Cardiac septum (tissue), 1 donor: ENCODE measurements at regions of chr15 and their contacts with region 1.

Region 1: DNA sequence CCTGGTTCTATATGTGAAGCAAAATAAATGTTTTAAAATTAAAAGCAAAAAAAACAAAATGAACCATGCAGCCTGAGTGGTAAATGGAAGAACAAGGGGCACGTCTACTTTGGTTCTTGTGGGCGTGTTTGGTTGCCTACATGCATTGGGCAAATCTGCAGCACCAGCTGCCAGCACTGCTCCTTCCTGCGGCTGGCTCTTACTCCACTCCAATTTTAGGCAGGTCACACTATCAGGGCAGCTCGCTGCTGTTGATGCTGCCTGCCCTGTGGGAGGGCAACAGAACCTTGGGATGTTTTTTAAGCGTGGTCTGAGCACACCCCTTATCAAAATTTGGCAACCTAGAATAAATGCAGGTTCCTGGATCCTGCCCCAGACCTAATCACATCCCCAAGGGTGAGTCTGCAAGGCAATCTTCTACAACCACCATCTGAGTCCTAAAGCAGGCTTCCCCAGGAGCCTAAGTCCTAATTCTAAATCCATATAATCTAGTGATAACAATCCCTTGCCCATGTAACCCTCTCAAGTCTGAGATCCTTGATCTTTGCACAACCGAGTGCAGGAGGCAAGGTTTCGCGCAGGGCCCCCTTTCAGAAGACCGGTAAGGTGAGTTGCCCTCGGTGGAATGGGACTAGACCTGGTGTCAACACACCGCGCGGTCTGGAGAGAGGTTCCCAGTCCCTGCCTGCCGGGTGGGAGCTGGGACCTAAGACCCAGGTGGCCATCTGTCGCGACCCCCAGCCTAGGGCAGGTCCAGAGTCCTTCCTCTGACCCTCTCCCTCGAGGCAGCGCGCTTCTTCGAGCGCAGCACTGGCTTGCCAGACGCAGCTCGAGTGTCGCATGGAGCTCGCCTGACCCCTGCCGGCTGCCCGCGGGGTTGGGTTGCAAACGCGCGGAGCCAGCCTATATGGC is 15.9 kb downstream of the IVD start:
- DNase-seq: peak; percentile 94

Region 2: GRCh38 chr15:40069178-40070165 is 352.0 kb before region 1 on chr15:
- intact Hi-C with region 1: loop called (anchors 10 kb)
- DNase-seq: peak; percentile 94

Region 3: DNA sequence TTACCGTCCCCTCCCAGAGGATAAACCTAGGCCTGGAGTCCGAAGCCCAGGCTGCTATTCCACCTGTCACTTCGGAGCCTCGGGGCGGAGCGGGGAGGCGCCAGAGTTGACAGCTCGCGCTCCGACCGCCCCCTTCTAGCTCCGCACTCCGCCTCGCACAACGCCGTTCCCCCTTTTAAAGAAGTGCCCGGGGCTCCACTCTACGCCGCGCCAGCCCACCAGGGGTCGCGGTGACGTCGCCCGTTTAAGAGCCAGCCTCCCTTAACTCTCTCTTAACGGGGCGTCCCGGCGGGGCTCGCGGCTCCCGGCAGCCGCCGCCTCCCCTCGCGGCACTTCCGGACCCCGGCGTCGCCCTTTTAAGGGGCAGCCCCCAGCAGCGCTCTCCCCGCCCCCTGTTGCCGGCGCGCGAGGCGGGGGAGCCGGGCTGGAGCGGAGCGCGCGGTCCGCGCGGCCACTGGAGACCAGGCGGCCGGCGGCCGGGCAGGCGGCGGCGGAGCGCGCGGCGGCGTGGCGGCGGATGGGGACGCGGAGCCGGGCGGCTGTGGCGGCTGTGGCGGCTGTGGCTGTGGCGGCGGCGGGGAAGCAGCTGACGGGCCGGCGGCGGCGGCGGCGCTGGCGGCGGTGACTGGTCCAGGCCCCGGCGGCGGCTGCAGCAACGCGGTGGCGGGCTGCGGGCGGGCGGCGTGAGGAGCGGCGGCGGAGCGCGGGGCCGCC is 98.1 kb before region 1 on chr15 and contains the start of gene INAFM2:
- intact Hi-C with region 1: loop called (anchors 1 kb)
- DNase-seq: peak; percentile 94
- total RNA-seq, gene INAFM2: 40.0 TPM

Region 4: DNA sequence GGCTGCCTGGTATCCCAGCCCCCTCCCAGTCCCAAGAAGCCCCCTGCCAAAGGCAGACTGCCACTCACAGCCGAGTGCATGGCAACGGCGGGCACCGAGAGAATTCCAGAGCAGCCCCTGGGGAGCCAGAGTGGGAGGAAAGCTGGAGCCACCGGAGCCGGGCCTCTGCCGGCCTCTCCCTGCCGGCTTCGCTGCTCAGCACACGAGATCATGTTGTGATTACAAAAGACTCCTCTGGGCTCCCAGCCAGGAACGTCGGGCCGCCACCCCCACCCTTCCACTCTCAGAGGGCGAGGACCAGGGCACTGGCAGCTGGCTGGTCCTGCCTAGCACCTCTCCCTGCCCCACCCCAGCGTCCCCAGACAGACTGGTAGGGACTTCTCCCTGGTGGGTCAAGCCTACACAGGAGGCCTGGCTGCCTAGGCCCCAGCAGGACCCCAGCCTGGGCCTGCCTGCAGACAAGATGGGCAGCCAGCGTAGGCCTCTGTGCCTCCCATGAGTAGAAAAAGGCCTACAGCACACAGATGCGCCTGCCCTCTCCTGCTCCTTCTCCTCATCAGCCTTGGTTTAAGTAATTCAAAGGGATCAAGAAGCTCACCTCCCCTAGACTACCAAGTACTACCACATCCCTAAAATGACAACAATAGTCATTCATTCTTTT is 80.6 kb before region 1 on chr15 and contains the start of gene CCDC9B:
- intact Hi-C with region 1: loop called (anchors 1 kb)
- DNase-seq: peak; percentile 95
- total RNA-seq, gene CCDC9B: 178 TPM

Region 5: DNA sequence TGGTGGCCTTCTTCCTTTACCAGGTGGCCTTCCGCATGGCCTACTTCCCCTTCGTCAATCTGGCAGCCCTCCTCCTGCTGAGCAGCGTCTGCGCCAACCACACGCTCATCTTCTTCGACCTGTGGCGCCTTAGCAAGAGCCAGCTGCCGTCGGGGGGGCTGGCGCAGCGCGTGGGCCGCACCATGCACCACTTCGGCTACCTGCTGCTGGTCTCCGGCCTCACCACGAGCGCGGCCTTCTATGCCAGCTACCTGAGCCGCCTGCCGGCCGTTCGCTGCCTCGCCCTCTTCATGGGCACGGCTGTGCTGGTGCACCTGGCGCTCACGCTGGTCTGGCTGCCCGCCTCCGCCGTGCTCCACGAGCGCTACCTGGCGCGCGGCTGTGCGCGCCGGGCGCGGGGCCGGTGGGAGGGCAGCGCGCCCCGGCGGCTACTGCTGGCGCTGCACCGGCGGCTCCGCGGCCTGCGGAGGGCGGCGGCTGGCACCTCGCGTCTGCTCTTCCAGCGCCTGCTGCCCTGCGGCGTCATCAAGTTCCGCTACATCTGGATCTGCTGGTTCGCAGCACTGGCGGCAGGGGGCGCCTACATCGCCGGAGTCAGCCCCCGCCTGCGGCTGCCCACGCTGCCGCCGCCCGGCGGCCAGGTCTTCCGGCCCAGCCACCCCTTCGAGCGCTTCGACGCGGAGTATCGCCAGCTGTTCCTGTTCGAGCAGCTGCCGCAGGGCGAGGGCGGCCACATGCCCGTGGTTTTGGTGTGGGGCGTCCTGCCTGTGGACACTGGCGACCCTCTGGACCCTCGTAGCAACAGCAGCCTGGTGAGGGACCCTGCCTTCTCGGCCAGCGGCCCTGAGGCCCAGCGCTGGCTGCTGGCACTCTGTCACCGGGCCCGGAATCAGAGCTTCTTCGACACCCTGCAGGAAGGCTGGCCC is 53.6 kb before region 1 on chr15:
- intact Hi-C with region 1: loop called (anchors 2 kb)
- DNase-seq: peak; percentile 94